ENCODE measurements at regions of chr18 and their contacts with region 1.

Region 1: DNA sequence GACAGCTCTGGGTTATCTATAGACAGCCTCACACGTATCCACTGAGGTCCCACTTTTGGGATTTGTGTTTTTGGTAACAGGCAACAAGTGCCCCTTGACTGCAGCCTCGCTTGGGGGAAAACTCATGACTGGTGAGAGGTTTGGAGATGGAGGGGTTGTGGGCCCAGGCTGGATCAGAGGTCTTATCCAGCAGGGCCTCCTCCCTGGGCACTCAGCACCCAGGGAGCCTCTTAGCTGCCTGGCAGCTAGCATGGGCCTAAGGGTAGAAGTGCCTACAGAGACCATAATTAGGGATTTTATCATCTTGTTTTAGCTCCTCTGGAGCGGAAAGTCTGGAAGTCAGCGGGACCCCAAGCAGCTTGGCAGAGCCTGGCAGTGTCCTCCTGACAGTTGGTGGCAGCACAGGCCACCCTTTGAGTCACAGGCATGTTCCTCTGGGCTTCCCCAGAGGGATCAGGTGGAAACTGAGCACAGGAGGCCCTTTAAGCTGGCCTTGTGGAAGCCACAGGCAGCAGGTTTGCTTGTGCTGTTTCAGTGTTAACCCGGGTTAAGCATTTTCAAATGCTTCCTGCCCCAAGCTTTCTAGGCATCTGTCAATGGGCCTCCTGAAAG is 143.1 kb downstream of the KCTD1 start:
- DNase-seq: peak; percentile 32 to 51
- H3K4me3 ChIP-seq: no peak overlapping the region
- H3K27ac ChIP-seq: no peak overlapping the region
- H3K4me1 ChIP-seq: peaks cover 20% of the 10 kb centered on the region
- H3K27me3 ChIP-seq: no peaks in the 10 kb centered on the region
- CTCF ChIP-seq: peak; percentile 61

Region 2: DNA sequence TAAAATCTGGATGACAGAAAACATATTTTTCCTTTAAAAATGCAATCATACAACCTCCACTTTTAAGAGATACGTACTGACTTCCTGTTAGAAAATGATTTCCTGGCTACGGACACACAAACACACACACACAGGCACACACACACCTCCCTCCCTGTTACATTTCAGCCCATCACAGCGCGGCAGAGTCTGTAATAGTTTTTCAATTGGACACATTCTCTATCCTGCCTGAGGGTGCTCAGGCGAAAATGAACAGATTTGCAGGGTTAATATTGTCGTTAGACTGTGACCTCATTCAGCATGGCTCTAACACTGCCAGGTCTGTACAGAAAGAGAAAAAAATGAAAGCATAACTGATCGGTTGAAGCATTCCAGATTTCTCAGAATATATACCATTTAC is 98.1 kb after region 1 on chr18:
- CTCF ChIA-PET with region 1: no interaction called
- POLR2A ChIA-PET with region 1: no interaction called
- intact Hi-C with region 1: no loop called
- DNase-seq: no peak
- H3K4me3 ChIP-seq: no peak overlapping the region
- H3K27ac ChIP-seq: no peak overlapping the region
- H3K4me1 ChIP-seq: no peaks in the 10 kb centered on the region
- H3K27me3 ChIP-seq: no peaks in the 10 kb centered on the region
- CTCF ChIP-seq: no peak

Region 3: GRCh38 chr18:26650310-26651268 is 245.3 kb after region 1 on chr18:
- CTCF ChIA-PET with region 1: no interaction called
- POLR2A ChIA-PET with region 1: no interaction called
- intact Hi-C with region 1: loop called (anchors 1 kb)
- DNase-seq: no peak
- H3K4me3 ChIP-seq: no peak overlapping the region
- H3K27ac ChIP-seq: no peak overlapping the region
- H3K4me1 ChIP-seq: no peaks in the 10 kb centered on the region
- H3K27me3 ChIP-seq: no peaks in the 10 kb centered on the region
- CTCF ChIP-seq: no peak

Region 4: GRCh38 chr18:27005589-27005988 is 600.3 kb after region 1 on chr18:
- CTCF ChIA-PET with region 1: no interaction called
- POLR2A ChIA-PET with region 1: no interaction called
- intact Hi-C with region 1: loop called (anchors 10 kb)
- DNase-seq: no peak
- H3K4me3 ChIP-seq: no peak overlapping the region
- H3K27ac ChIP-seq: no peak overlapping the region
- H3K4me1 ChIP-seq: no peaks in the 10 kb centered on the region
- H3K27me3 ChIP-seq: no peaks in the 10 kb centered on the region
- CTCF ChIP-seq: peak; percentile 54; the same call in 1 of the 2 replicates

Measured in PC-9 (cell line).